ENCODE measurements at regions of chr12 and their contacts with region 1.

Region 1: GRCh38 chr12:2034633-2035430 is 18.0 kb upstream of the CACNA1C start:
- DNase-seq: peak; percentile 72 to 91 (median 83)
- ATAC-seq: peak; percentile 99
- H3K4me3 ChIP-seq: peak overlapping the region; percentile 49 to 51
- H3K4me3 Mint-ChIP-seq: peak overlapping the region; percentile 66
- H3K27ac ChIP-seq: no peak overlapping the region
- H3K27ac Mint-ChIP-seq: no peak overlapping the region
- H3K4me1 ChIP-seq: peaks cover 12% of the 10 kb centered on the region
- H3K4me1 Mint-ChIP-seq: peaks cover 15% of the 10 kb centered on the region
- H3K27me3 ChIP-seq: no peaks in the 10 kb centered on the region
- H3K27me3 Mint-ChIP-seq: peaks cover 29% of the 10 kb centered on the region
- CTCF ChIP-seq: peak; percentile 88

Region 2: GRCh38 chr12:1812650-1813302 is 222.1 kb before region 1 on chr12:
- CTCF ChIA-PET with region 1: no interaction called
- POLR2A ChIA-PET with region 1: no interaction called
- intact Hi-C with region 1: loop called in 1 of 2 experiments (anchors 5 kb)
- DNase-seq: peak in 2 of 9 experiments; percentile 15 to 40
- ATAC-seq: no peak
- H3K4me3 ChIP-seq: no peak overlapping the region
- H3K4me3 Mint-ChIP-seq: no peak overlapping the region
- H3K27ac ChIP-seq: no peak overlapping the region
- H3K27ac Mint-ChIP-seq: no peak overlapping the region
- H3K4me1 ChIP-seq: no peaks in the 10 kb centered on the region
- H3K4me1 Mint-ChIP-seq: peaks cover 7% of the 10 kb centered on the region
- H3K27me3 ChIP-seq: no peaks in the 10 kb centered on the region
- H3K27me3 Mint-ChIP-seq: peaks cover 9% of the 10 kb centered on the region
- CTCF ChIP-seq: no peak

Region 3: GRCh38 chr12:1993341-1993740 is 41.5 kb before region 1 on chr12:
- CTCF ChIA-PET with region 1: interaction called, 5 read pairs
- POLR2A ChIA-PET with region 1: no interaction called
- intact Hi-C with region 1: loop called in 1 of 2 experiments (anchors 2 kb)
- DNase-seq: peak in 2 of 9 experiments; percentile 39 to 58
- ATAC-seq: peak; percentile 31
- H3K4me3 ChIP-seq: no peak overlapping the region
- H3K4me3 Mint-ChIP-seq: no peak overlapping the region
- H3K27ac ChIP-seq: peak overlapping the region in 1 of 2 experiments; percentile 79
- H3K27ac Mint-ChIP-seq: peak overlapping the region; percentile 15
- H3K4me1 ChIP-seq: peaks cover 15% of the 10 kb centered on the region
- H3K4me1 Mint-ChIP-seq: peaks cover 43% of the 10 kb centered on the region
- H3K27me3 ChIP-seq: no peaks in the 10 kb centered on the region
- H3K27me3 Mint-ChIP-seq: no peaks in the 10 kb centered on the region
- CTCF ChIP-seq: no peak

Measured in CD8-positive, alpha-beta T cell (primary cell).